Activated naive CD4-positive, alpha-beta T cell treated with anti-CD3 and anti-CD28 coated beads for 36 hours (primary cell): ENCODE measurements at regions of chr22 and their contacts with region 1.

Region 1: GRCh38 chr22:50016988-50017700 is 4.6 kb upstream of the IL17REL start:
- DNase-seq: peak; percentile 94
- H3K4me3 Mint-ChIP-seq: peak overlapping the region; percentile 77
- H3K27ac Mint-ChIP-seq: no peak overlapping the region
- H3K4me1 Mint-ChIP-seq: peaks cover 30% of the 10 kb centered on the region
- H3K27me3 Mint-ChIP-seq: no peaks in the 10 kb centered on the region

Region 2: DNA sequence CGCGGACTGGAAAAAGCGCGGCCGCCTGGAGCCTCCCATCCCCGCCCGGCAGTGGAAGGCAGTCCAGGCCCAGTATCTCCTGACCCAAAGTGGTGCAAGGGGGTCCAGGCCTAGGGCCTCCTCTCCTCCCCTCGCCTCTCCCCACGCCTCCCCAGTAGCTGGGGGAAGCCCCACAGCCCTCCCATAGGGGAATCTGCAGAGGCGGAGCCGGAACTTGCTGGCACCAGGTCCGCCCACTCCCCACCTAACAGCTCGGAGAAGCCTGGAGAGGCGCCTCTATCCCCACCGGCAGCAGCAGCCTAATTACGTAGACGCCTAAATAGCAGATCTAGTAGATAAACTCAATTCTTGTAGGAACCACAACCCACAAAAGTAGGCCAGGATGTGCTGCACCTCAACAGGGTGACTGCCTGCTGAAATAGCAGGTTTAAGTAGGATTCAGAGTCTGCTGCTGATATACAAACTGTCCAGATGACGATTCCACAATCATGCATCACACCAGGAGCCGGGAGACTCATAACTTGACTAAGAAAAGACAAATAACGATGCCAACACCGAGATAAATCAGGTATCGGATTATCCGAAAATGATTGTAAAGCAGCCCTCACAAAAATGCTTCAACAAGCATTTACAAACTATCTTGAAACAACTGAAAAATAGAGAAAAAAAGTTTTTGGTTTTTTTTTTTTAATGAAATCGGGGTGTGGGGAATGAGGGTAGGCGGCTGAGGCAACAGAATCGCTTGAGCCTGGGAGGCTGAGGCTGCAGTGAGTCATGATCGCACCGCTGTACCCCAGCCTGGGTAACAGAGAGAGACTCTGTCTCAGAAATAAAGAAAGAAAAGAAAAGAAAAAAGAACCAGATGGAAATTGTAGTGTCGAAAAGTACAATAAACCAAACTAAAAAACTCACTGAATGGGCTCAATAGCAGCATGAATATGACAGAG is 178.1 kb before region 1 on chr22:
- CTCF ChIA-PET with region 1: no interaction called
- intact Hi-C with region 1: loop called (anchors 1 kb)
- DNase-seq: peak; percentile 90
- H3K4me3 Mint-ChIP-seq: peak overlapping the region; percentile 67
- H3K27ac Mint-ChIP-seq: peak overlapping the region; percentile 85
- H3K4me1 Mint-ChIP-seq: peaks cover 31% of the 10 kb centered on the region
- H3K27me3 Mint-ChIP-seq: no peaks in the 10 kb centered on the region

Region 3: GRCh38 chr22:49960159-49961004 is 56.8 kb before region 1 on chr22 and contains the start of gene PIM3:
- CTCF ChIA-PET with region 1: no interaction called
- intact Hi-C with region 1: loop called (anchors 1 kb)
- DNase-seq: peak; percentile 94
- H3K4me3 Mint-ChIP-seq: peak within 1 kb of the TSS; percentile 91
- H3K27ac Mint-ChIP-seq: peak within 1 kb of the TSS; percentile 94
- H3K4me1 Mint-ChIP-seq: peaks cover 23% of the 10 kb centered on the region
- H3K27me3 Mint-ChIP-seq: no peaks in the 10 kb centered on the region
- total RNA-seq, gene PIM3: 202 to 210 TPM

Region 4: GRCh38 chr22:49992921-49993648 is 24.1 kb before region 1 on chr22:
- CTCF ChIA-PET with region 1: interaction called, 26 read pairs
- intact Hi-C with region 1: no loop called
- DNase-seq: peak; percentile 85
- H3K4me3 Mint-ChIP-seq: no peak overlapping the region
- H3K27ac Mint-ChIP-seq: peak overlapping the region; percentile 19
- H3K4me1 Mint-ChIP-seq: peaks cover 4% of the 10 kb centered on the region
- H3K27me3 Mint-ChIP-seq: no peaks in the 10 kb centered on the region

Region 5: GRCh38 chr22:50058906-50059880 is 42.0 kb after region 1 on chr22:
- CTCF ChIA-PET with region 1: no interaction called
- intact Hi-C with region 1: no loop called
- DNase-seq: no peak
- H3K4me3 Mint-ChIP-seq: no peak overlapping the region
- H3K27ac Mint-ChIP-seq: no peak overlapping the region
- H3K4me1 Mint-ChIP-seq: peaks cover 2% of the 10 kb centered on the region
- H3K27me3 Mint-ChIP-seq: peaks cover 31% of the 10 kb centered on the region

Region 6: GRCh38 chr22:50129121-50129736 is 112.1 kb after region 1 on chr22:
- CTCF ChIA-PET with region 1: no interaction called
- intact Hi-C with region 1: no loop called
- DNase-seq: no peak
- H3K4me3 Mint-ChIP-seq: no peak overlapping the region
- H3K27ac Mint-ChIP-seq: no peak overlapping the region
- H3K4me1 Mint-ChIP-seq: no peaks in the 10 kb centered on the region
- H3K27me3 Mint-ChIP-seq: peaks cover 10% of the 10 kb centered on the region

Region 7: DNA sequence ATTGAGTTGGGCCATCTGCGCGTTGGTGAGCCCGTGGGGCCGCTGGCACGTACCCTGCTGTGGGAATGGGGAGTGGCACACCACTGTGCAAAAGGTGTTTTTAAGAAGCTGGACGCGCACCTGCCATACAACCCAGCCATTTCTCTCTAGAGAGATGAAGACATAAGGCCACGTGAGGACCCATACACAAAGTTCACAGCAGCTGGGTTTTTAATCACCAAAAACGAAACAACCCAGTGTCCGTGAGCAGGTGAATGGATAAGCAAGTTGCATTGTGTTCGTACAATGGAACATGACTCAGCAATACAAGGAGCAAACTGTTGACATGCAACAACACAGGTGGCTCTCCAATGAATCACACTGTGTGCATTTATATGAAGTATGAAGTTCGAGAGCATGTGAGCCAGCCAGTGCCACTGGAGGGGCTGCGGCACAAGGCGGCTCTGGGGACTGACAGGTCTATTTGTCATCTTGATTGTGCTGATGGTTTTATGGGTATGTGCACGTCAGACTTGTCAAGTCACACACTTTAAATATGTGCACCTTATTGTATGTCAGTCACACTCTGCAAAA is 122.8 kb after region 1 on chr22:
- CTCF ChIA-PET with region 1: no interaction called
- intact Hi-C with region 1: no loop called
- DNase-seq: no peak
- H3K4me3 Mint-ChIP-seq: no peak overlapping the region
- H3K27ac Mint-ChIP-seq: no peak overlapping the region
- H3K4me1 Mint-ChIP-seq: no peaks in the 10 kb centered on the region
- H3K27me3 Mint-ChIP-seq: peaks cover 2% of the 10 kb centered on the region

Region 8: DNA sequence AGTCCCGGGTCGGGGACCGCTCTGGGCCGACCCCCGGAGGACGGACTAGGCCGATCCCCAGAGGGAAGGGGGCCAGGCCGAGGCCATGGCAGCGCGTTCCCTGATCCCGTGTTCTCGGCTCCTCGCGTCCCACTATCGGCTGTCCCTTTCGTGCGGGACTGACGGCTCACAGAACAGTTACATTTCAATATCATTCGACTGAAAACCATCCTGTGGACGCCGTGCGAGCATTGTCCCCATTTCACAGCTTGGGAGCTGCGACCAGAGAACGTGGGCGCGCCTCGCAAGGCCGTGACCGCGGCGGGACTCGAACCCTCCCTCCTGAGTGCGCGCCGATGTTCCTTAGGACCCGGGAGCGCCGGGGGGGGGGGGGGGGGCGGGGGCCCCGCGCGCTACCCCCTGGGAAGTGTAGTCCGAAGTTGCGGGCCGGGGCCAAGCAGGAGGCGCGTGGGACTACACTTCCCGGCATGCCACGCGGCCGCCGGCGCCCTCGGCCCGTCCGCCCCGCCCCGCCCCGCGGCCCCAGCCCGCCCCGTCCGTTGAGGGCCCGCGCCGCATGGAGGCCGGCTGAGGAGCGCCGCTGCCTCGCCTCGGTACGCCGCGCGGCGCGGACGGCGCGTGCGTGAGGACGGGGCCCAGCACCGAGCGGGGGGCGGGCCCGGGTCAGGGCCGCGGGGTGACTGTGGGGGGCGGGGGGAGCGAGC is 168.4 kb after region 1 on chr22 and contains the start of gene TRABD:
- CTCF ChIA-PET with region 1: no interaction called
- intact Hi-C with region 1: loop called (anchors 5 kb)
- DNase-seq: peak; percentile 90
- H3K4me3 Mint-ChIP-seq: peak within 1 kb of the TSS; percentile 93
- H3K27ac Mint-ChIP-seq: peak within 1 kb of the TSS; percentile 87
- H3K4me1 Mint-ChIP-seq: peaks cover 33% of the 10 kb centered on the region
- H3K27me3 Mint-ChIP-seq: no peaks in the 10 kb centered on the region
- total RNA-seq, gene TRABD: 61.0 to 62.8 TPM